Mammary epithelial cell (primary cell): ENCODE measurements at regions of chr3 and their contacts with region 1.

Region 1: DNA sequence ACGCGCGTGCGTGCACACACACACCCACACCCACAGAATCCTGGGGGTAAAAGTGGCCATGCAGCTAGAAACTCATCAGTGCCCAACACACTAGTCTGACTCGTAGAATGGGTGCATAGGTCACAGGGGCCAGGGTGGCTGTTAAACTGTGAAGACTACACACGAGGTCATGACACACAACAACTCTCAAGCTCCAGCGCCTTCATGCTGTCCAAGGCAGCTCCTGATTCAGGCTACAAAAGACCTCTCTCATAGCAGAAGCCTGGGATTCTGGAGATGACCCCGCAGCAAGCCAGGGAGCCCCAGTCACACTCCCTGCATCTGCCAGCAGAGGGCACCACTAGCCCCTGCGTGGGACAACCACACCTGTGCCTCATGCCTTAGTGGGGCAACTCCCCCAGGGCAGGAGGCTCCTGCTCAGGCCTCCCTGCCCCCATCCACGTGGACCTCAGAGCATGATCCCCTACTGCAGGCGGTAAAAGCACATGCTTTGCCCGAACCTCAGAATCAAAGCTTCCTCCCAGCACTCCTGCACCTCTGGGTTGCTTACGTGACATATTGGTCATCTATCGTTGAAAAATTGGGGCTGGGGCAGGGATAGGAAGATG is 93.1 kb downstream of the LRIG1 start:
- DNase-seq: peak; percentile 34
- H3K4me3 ChIP-seq: no peak overlapping the region
- H3K27ac ChIP-seq: no peak overlapping the region
- H3K4me1 ChIP-seq: no peaks in the 10 kb centered on the region
- H3K27me3 ChIP-seq: no peaks in the 10 kb centered on the region
- CTCF ChIP-seq: peak; percentile 85 to 96

Region 2: GRCh38 chr3:66253790-66254620 is 153.7 kb before region 1 on chr3:
- CTCF ChIA-PET with region 1: no interaction called
- dilution Hi-C with region 1: no loop called
- in situ Hi-C with region 1: no loop called
- intact Hi-C with region 1: loop called (anchors 1 kb)
- DNase-seq: peak; percentile 11
- H3K4me3 ChIP-seq: no peak overlapping the region
- H3K27ac ChIP-seq: no peak overlapping the region
- H3K4me1 ChIP-seq: no peaks in the 10 kb centered on the region
- H3K27me3 ChIP-seq: no peaks in the 10 kb centered on the region
- CTCF ChIP-seq: peak; percentile 59 to 65

Region 3: GRCh38 chr3:66490214-66490613 is 82.5 kb after region 1 on chr3:
- CTCF ChIA-PET with region 1: no interaction called
- dilution Hi-C with region 1: loop called (anchors 5 kb)
- in situ Hi-C with region 1: no loop called
- intact Hi-C with region 1: no loop called
- DNase-seq: no peak
- H3K4me3 ChIP-seq: no peak overlapping the region
- H3K27ac ChIP-seq: no peak overlapping the region
- H3K4me1 ChIP-seq: no peaks in the 10 kb centered on the region
- H3K27me3 ChIP-seq: no peaks in the 10 kb centered on the region
- CTCF ChIP-seq: no peak

Region 4: GRCh38 chr3:66500576-66501482 is 93.1 kb after region 1 on chr3 and contains the start of gene LRIG1:
- CTCF ChIA-PET with region 1: no interaction called
- dilution Hi-C with region 1: no loop called
- in situ Hi-C with region 1: no loop called
- intact Hi-C with region 1: loop called (anchors 2 kb)
- DNase-seq: peak; percentile 97
- H3K4me3 ChIP-seq: peak within 1 kb of the TSS; percentile 52 to 95 (median 88)
- H3K27ac ChIP-seq: no peak within 1 kb of the TSS
- H3K4me1 ChIP-seq: peaks cover 2% of the 10 kb centered on the region
- H3K27me3 ChIP-seq: no peaks in the 10 kb centered on the region
- CTCF ChIP-seq: peak in 1 of 2 donors; percentile 38
- total RNA-seq, gene LRIG1: 11.7 to 15.3 TPM

Region 5: DNA sequence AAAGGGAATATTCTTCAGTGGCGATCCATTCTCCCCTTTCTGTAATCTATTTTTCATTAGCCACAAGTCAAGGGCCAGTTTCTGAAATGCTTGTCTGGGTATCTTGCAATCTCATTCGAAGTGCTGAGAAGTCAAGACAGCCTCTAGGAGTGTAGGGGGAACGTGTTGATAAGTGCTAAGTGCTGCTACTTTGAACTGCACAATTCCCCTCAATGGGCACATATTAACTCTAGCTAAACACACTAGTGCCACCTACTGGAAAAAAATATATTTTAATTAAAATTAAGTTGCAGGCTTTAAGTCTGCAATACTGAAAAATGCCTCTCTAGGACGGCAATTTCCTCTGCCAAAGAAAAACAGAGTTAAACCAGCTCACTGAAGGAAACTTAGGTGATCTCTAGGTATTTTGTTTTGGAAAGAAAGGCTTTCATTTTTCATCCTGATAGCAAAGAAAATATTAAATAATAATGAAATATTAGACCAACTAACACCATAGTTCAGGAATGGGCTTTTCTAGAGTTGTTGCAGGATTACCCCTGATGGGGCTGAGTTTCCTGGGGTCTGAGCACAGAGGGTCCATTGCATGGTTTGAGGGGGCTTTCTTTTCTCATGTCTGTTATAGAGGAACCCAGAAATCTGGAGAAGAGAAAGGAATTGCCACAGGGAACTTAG is 408.5 kb after region 1 on chr3:
- CTCF ChIA-PET with region 1: interaction called, 3 read pairs
- dilution Hi-C with region 1: loop called (anchors 5 kb)
- in situ Hi-C with region 1: loop called (anchors 5 to 10 kb)
- intact Hi-C with region 1: loop called (anchors 1 kb)
- DNase-seq: peak; percentile 13
- H3K4me3 ChIP-seq: no peak overlapping the region
- H3K27ac ChIP-seq: no peak overlapping the region
- H3K4me1 ChIP-seq: no peaks in the 10 kb centered on the region
- H3K27me3 ChIP-seq: no peaks in the 10 kb centered on the region
- CTCF ChIP-seq: peak; percentile 19 to 57

Region 6: GRCh38 chr3:66822186-66823008 is 414.7 kb after region 1 on chr3:
- CTCF ChIA-PET with region 1: no interaction called
- dilution Hi-C with region 1: loop called (anchors 5 kb)
- in situ Hi-C with region 1: loop called (anchors 5 to 10 kb)
- intact Hi-C with region 1: no loop called
- DNase-seq: peak; percentile 55
- H3K4me3 ChIP-seq: no peak overlapping the region
- H3K27ac ChIP-seq: no peak overlapping the region
- H3K4me1 ChIP-seq: no peaks in the 10 kb centered on the region
- H3K27me3 ChIP-seq: peaks cover 2% of the 10 kb centered on the region
- CTCF ChIP-seq: peak; percentile 74 to 86